Activated CD8-positive, alpha-beta T cell treated with anti-CD3 and anti-CD28 coated beads, Interleukin-2, amount 10 ng/mL, durations not matched to agents 7 days and 5 days (primary cell): ENCODE measurements at regions of chr7 and their contacts with region 1.

Region 1: GRCh38 chr7:8295638-8296361 is 33.8 kb upstream of the ICA1 start:
- DNase-seq: peak; percentile 56
- ATAC-seq: peak; percentile 76
- H3K4me3 Mint-ChIP-seq: no peak overlapping the region
- H3K27ac Mint-ChIP-seq: no peak overlapping the region
- H3K4me1 Mint-ChIP-seq: peaks cover 2% of the 10 kb centered on the region
- H3K27me3 Mint-ChIP-seq: peaks cover 10% of the 10 kb centered on the region

Region 2: DNA sequence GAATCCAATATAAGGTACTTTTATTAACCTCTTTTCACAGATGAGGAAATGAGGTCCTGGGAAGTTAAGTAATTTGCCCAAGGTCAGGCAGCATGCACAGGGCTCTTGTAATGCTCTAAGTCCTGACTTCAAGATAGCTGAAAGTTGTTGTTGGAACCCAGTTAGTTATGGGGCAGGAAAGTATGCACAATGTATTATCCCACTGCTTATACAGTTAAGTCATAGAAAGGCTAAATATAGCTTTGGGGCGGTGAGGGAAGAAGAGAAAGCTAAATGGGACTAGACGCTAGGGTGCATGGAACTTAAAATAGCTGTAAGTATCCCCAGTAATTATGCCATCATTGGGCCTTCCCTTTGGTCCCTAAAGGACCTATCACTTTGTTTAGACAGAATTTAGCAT is 318.0 kb before region 1 on chr7:
- CTCF ChIA-PET with region 1: no interaction called
- POLR2A ChIA-PET with region 1: no interaction called
- DNase-seq: no peak
- ATAC-seq: no peak
- H3K4me3 Mint-ChIP-seq: no peak overlapping the region
- H3K27ac Mint-ChIP-seq: no peak overlapping the region
- H3K4me1 Mint-ChIP-seq: peaks cover 21% of the 10 kb centered on the region
- H3K27me3 Mint-ChIP-seq: no peaks in the 10 kb centered on the region

Region 3: GRCh38 chr7:8092140-8092539 is 203.7 kb before region 1 on chr7:
- CTCF ChIA-PET with region 1: no interaction called
- POLR2A ChIA-PET with region 1: no interaction called
- DNase-seq: no peak
- ATAC-seq: no peak
- H3K4me3 Mint-ChIP-seq: no peak overlapping the region
- H3K27ac Mint-ChIP-seq: no peak overlapping the region
- H3K4me1 Mint-ChIP-seq: no peaks in the 10 kb centered on the region
- H3K27me3 Mint-ChIP-seq: no peaks in the 10 kb centered on the region

Region 4: DNA sequence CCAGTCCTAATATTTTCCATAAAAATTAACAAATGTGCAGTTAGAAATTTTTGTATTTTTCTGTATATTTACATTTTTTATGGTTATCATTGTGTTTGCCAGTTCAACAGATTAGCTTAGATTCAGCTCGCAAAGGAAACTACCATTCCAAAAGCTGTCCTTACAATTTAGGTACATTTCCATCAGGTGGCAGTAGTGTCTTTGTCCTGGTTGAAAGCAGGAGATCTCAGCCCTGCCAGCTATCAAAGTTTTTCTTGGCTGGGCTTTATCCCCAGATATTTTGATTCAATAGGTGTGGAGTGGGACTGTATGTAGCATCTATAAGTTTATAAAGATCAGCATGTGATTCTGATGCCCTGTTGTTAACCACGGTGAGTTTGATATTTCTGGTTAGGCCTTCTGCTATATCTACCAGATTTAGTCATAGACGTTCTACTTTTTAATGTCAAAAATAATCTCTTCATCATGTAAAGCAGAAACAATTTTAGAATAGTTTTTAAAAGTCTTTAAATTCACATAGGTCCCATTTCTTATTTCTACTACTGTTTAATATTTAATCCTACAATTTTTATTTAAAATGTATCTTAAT is 18.3 kb before region 1 on chr7:
- CTCF ChIA-PET with region 1: interaction called, 12 read pairs
- POLR2A ChIA-PET with region 1: no interaction called
- DNase-seq: no peak
- ATAC-seq: no peak
- H3K4me3 Mint-ChIP-seq: no peak overlapping the region
- H3K27ac Mint-ChIP-seq: no peak overlapping the region
- H3K4me1 Mint-ChIP-seq: no peaks in the 10 kb centered on the region
- H3K27me3 Mint-ChIP-seq: peaks cover 7% of the 10 kb centered on the region

Region 5: DNA sequence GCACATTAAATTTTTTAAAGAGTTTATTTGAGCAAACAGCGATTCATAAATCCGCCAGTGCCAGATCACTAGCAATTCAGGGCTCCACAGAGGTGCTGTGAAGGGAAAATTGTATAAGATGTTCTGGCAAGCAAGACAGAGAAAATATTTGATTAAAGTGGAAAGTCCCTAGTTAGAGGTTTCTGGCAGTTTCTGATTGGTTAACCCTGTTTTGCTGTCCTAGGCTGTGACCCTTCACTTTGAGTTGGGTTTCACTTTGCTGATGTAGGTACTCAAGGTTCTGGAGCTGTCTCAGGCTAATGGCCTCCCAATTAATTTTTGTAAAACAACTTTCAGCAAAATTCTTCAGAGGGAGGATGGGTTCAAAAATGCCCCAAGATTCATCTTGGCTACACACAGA is 58.2 kb after region 1 on chr7:
- CTCF ChIA-PET with region 1: no interaction called
- POLR2A ChIA-PET with region 1: no interaction called
- DNase-seq: no peak
- ATAC-seq: no peak
- H3K4me3 Mint-ChIP-seq: no peak overlapping the region
- H3K27ac Mint-ChIP-seq: no peak overlapping the region
- H3K4me1 Mint-ChIP-seq: no peaks in the 10 kb centered on the region
- H3K27me3 Mint-ChIP-seq: no peaks in the 10 kb centered on the region